Panc1 (cell line): ENCODE measurements at regions of chr1 and their contacts with region 1.

Region 1: GRCh38 chr1:77143529-77144121 is 75.6 kb downstream of the PIGK start:
- DNase-seq: no peak
- ATAC-seq: no peak
- H3K4me3 ChIP-seq: no peak overlapping the region
- H3K27ac ChIP-seq: no peak overlapping the region
- H3K4me1 ChIP-seq: no peaks in the 10 kb centered on the region
- H3K27me3 ChIP-seq: no peaks in the 10 kb centered on the region
- CTCF ChIP-seq: peak; percentile 37; the same call in 1 of the 2 replicates

Region 2: GRCh38 chr1:75991497-75992114 is 1152.0 kb before region 1 on chr1:
- CTCF ChIA-PET with region 1: no interaction called
- POLR2A ChIA-PET with region 1: no interaction called
- in situ Hi-C with region 1: no loop called
- intact Hi-C with region 1: loop called (anchors 5 kb)
- DNase-seq: peak; percentile 35
- ATAC-seq: peak; percentile 75
- H3K4me3 ChIP-seq: no peak overlapping the region
- H3K27ac ChIP-seq: no peak overlapping the region
- H3K4me1 ChIP-seq: no peaks in the 10 kb centered on the region
- H3K27me3 ChIP-seq: peaks cover 10% of the 10 kb centered on the region
- CTCF ChIP-seq: peak; percentile 86

Region 3: GRCh38 chr1:77313491-77313890 is 169.9 kb after region 1 on chr1:
- CTCF ChIA-PET with region 1: no interaction called
- POLR2A ChIA-PET with region 1: no interaction called
- in situ Hi-C with region 1: no loop called
- intact Hi-C with region 1: loop called (anchors 10 kb)
- DNase-seq: no peak
- ATAC-seq: peak; percentile 96
- H3K4me3 ChIP-seq: no peak overlapping the region
- H3K27ac ChIP-seq: no peak overlapping the region
- H3K4me1 ChIP-seq: no peaks in the 10 kb centered on the region
- H3K27me3 ChIP-seq: no peaks in the 10 kb centered on the region
- CTCF ChIP-seq: peak; percentile 73

Region 4: DNA sequence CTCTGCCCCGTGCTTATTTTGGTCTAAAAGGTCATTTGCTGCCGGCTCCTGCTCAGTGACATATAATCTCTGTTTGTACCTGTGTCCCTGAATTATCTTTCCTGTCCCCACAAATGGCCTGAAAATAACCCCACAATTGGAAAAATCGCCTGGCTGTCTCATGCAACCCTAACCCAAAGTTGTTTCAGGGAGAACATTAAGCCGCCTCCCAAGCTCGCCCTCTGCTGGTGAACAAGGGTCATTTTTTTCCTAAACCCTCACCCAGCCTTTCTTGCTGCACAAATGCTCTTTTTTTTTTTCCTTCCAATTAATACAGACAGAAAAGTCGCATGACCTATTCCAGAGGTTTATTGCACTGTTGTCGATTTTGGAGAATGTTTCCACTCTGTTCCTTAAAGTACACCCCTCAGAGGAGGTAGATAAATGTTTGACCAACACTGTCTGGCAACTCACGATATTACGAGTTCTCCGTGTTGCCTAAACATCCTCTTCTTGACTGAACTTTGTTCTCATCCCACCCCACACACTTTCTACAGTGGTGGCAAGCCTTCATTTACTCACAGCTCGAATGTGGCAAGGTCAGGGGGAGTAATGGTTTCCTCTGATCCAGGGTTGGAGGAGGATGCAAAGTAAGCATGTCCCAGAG is 390.2 kb after region 1 on chr1:
- CTCF ChIA-PET with region 1: no interaction called
- POLR2A ChIA-PET with region 1: no interaction called
- in situ Hi-C with region 1: no loop called
- intact Hi-C with region 1: loop called (anchors 2 kb)
- DNase-seq: no peak
- ATAC-seq: no peak
- H3K4me3 ChIP-seq: no peak overlapping the region
- H3K27ac ChIP-seq: 0 out of 2 replicates have a peak overlapping the region, but pooled peaks have one; percentile 8
- H3K4me1 ChIP-seq: peaks cover 27% of the 10 kb centered on the region
- H3K27me3 ChIP-seq: no peaks in the 10 kb centered on the region
- CTCF ChIP-seq: peak; percentile 92